ENCODE measurements at regions of chrX and their contacts with region 1.

Region 1: GRCh38 chrX:148960060-148960459 is 459.6 kb downstream of the AFF2 start:
- DNase-seq: peak; percentile 1
- H3K4me3 ChIP-seq: no peak overlapping the region
- H3K27ac ChIP-seq: no peak overlapping the region
- H3K4me1 ChIP-seq: no peaks in the 10 kb centered on the region
- H3K27me3 ChIP-seq: no peaks in the 10 kb centered on the region
- CTCF ChIP-seq: no peak
- POLR2A ChIP-seq: no peak

Region 2: GRCh38 chrX:149021159-149021558 is 61.1 kb after region 1 on chrX:
- CTCF ChIA-PET with region 1: no interaction called
- POLR2A ChIA-PET with region 1: no interaction called
- dilution Hi-C with region 1: no loop called
- intact Hi-C with region 1: loop called (anchors 10 kb)
- DNase-seq: no peak
- H3K4me3 ChIP-seq: no peak overlapping the region
- H3K27ac ChIP-seq: no peak overlapping the region
- H3K4me1 ChIP-seq: no peaks in the 10 kb centered on the region
- H3K27me3 ChIP-seq: no peaks in the 10 kb centered on the region
- CTCF ChIP-seq: no peak
- POLR2A ChIP-seq: no peak